Cardiac septum (tissue), 1 donor: ENCODE measurements at regions of chr17 and their contacts with region 1.

Region 1: DNA sequence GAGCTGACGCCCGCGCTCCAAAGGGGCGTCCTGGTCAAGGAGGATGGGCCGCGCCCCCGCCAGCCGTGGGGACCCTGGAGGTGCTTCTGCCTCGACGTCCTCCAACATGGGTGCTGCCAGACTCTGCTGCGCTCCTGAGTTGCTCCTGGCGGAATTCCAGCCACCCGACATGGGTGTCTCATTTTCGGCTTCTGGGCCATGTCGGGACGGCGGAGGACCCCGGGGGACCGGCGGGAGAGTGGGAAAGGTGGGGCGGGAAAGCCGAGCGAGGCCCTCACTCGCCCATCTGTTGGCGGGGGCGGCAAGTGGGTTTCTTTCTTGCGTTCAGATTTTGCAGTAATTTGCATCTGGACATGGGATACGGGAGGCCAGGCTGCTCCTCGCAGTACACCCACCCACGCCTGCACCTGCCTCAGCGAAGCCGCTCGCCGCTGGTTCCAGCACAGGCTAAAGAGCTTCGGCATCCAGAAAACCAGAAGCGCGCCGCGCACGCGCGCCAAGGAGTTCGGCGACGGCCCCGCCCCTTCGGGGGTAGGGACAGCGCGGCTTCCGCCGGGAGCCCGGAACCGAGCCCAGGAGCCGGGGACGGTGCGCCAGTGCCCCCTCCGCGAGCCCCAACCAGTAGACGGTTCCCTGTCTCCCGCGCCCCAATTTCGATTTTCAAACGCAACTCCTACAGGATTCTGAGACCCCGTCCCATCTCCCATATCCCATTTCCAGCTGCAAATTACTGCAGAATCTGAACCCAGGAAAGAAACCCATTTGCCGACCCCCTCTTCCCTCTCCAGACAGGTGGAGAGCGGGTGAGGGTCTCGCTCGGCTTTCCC is at the start of gene ARMC7:
- DNase-seq: peak; percentile 97
- total RNA-seq, gene ARMC7: 8.0 TPM

Region 2: GRCh38 chr17:74961657-74962490 is 147.7 kb before region 1 on chr17:
- intact Hi-C with region 1: loop called (anchors 5 kb)
- DNase-seq: peak; percentile 90

Region 3: DNA sequence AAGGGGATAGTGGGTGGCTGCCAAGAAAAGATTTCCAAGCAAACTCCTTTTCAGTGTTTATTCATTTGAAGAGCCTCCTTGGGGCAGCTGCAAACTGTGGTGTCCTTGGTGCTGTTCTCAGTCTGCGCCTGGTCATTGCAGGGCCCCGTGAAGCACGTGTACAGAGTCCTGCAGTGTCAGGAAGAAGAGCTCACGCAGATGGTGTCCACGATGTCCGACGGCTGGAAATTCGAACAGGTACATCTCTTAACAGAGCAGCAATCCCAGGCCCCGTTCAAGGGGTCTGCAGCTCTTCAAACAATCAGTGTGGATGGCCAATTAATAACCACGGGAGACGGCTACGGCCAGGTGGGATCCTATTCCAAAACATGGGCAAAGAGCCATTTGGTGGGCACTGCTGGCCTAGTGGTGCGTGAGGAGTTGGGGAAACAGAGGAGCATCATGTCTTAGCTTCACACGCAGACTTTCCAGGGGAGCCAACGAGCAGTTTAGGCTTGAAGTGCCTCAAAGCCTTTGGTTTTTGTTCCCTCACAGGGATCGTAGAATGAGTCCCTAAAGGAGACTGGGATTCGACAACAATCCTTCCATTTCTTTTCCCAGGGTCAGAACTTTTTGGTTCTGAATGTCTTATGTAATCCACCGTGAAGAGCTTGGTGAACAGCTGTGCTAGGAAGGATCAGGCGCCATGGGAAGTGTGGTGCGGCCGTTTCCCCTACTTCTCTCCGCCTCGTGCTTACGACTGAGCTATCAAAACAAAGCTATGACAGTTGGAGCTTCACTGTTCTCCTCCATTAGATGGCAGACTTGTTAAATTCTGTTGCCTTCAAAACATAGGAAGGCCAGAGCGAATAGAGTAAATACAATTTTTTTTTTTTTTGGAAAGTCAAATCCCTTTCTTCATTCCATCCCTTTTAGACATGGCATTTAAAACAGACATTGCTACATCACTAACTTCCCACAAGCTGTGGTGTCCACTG is 50.0 kb before region 1 on chr17:
- intact Hi-C with region 1: no loop called
- DNase-seq: no peak

Region 4: DNA sequence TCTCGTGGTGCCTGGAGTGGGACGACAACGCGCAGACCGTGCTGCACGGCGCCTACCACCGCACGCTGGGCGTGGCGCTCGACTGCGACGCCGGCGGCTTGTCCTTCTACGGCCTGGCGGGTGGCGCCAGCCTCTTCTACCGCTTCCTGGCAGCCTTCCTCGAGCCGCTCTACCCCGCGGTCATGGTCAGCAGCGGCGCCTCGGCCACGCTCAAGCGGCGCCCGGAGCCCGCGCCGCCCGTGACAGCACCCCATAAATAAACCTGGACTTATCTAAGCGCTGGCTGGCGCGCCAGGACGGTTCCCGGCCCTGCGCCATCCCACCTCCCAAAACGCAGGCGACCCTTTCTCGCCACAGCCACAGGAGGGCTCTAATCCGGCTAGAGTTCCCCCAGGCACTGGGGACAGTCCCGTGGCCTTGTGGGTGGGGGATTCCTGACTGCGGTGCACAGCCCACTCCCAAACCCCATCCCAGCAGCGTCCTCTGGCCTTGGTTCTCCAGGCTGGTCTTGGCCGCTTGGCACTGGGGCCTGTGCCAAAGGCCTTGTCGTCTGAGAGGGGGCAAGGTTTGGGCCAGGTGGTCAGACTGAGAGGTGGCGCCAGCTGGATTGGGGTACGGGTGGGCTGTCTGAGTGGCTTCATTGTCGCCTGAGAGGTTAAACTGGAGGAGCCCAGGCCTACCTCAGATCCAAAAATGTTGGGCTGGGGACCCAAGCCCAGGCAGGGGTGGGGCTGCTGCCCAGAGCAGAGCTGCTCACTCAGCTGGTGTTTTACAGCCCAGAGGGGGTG is 31.9 kb before region 1 on chr17:
- intact Hi-C with region 1: no loop called
- DNase-seq: peak; percentile 92

Region 5: GRCh38 chr17:75154195-75155106 is 44.8 kb after region 1 on chr17 and contains the start of gene JPT1:
- intact Hi-C with region 1: loop called (anchors 5 kb)
- DNase-seq: peak; percentile 98
- total RNA-seq, gene JPT1: 15.2 TPM

Region 6: GRCh38 chr17:75199886-75200618 is 90.4 kb after region 1 on chr17:
- intact Hi-C with region 1: loop called (anchors 2 kb)
- DNase-seq: no peak

Region 7: DNA sequence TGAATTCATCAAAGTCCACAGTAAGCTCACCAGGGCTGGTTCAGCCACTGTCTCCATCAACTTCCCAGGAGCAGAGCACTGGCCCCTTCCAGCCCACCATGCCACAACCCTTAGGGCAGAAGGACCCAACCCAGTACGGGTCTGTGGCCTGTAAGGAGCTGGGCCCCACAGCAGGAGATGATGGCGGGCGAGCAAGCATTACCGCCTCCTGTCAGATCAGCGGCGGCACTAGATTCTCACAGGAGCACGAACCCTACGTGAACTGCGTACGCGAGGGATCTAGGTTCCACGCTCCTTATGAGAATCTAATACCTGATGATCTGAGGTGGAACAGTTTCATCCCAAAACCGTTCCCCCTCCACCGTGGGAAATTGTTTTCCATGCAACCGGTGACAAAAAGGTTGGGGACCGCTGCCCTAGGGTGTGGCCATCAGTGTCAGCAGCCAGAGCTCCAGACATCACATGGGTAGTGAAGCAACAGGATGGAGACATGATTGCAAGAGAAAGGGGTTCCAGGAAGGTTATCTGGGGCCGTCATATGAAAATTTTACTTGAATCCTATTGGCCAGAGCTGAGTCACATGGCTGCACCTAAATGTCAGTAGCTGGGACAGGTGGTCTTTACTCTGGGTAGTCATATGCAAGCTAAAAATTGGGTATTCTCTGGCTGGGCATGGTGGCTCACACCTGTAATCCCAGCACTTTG is 192.0 kb after region 1 on chr17:
- intact Hi-C with region 1: no loop called
- DNase-seq: no peak